K562 (cell line): ENCODE measurements at regions of chr1 and their contacts with region 1.

Region 1: GRCh38 chr1:114346480-114347029 is 164.4 kb downstream of the TRIM33 start:
- DNase-seq: peak; percentile 95 to 98 (median 96)
- ATAC-seq: peak; percentile 99
- H3K4me3 ChIP-seq: peak overlapping the region; percentile 20
- H3K27ac ChIP-seq: no peak overlapping the region
- H3K4me1 ChIP-seq: peaks cover 2 to 12% of the 10 kb centered on the region in 2 experiments; a peak in 4 of 5 replicates
- H3K27me3 ChIP-seq: no peaks in the 10 kb centered on the region; a peak in 1 of 5 replicates
- CTCF ChIP-seq: peak; percentile 100
- EP300 ChIP-seq: peak; percentile 50
- POLR2A ChIP-seq: no peak
- RAD21 ChIP-seq: peak; percentile 100

Region 2: GRCh38 chr1:114310695-114311271 is 35.8 kb before region 1 on chr1:
- CTCF ChIA-PET with region 1: no interaction called
- POLR2A ChIA-PET with region 1: no interaction called
- in situ Hi-C with region 1: no loop called
- intact Hi-C with region 1: no loop called
- DNase-seq: no peak
- ATAC-seq: no peak
- H3K4me3 ChIP-seq: no peak overlapping the region
- H3K27ac ChIP-seq: no peak overlapping the region
- H3K4me1 ChIP-seq: no peaks in the 10 kb centered on the region
- H3K27me3 ChIP-seq: peaks cover 0 to 3% of the 10 kb centered on the region in 2 experiments; a peak in 1 of 5 replicates
- CTCF ChIP-seq: no peak
- EP300 ChIP-seq: no peak
- POLR2A ChIP-seq: no peak
- RAD21 ChIP-seq: no peak

Region 3: DNA sequence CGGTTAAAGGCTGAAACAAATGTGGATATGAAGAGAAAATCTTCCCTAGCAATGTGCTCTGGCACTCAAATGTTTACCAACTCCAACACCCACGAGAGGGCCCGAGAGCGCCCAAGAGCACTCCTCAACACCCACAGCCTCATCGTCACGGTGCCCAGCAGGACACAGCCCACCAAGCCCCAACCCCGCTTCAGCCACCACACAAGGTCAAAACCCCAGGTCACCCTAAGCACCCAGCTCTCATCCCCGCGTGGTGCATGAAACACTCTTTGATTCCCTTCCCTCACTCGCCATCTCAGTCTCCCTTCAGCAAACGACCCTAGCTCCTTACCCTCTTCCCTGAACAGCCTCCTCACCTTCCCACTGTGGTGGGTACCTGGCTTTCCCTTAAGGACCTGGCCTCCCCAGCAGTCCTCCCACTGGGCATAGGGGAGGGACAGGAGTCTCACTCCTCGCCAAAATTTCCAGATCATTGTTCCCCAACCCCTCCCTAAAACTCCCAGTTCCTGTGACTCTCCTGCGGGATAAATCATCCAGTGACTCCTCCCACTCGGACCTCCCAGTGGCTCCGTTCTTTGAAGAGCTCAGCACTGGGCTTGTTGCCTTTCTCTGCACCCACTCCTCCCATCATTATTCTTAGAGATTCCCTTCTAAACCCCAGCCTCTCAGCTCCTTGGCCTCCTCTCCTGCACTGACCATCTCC is 22.4 kb before region 1 on chr1:
- CTCF ChIA-PET with region 1: no interaction called
- POLR2A ChIA-PET with region 1: no interaction called
- in situ Hi-C with region 1: no loop called
- intact Hi-C with region 1: no loop called
- DNase-seq: no peak
- ATAC-seq: no peak
- H3K4me3 ChIP-seq: no peak overlapping the region
- H3K27ac ChIP-seq: no peak overlapping the region
- H3K4me1 ChIP-seq: no peaks in the 10 kb centered on the region
- H3K27me3 ChIP-seq: peaks cover 0 to 15% of the 10 kb centered on the region in 2 experiments; a peak in 1 of 5 replicates
- CTCF ChIP-seq: no peak
- EP300 ChIP-seq: no peak
- POLR2A ChIP-seq: no peak
- RAD21 ChIP-seq: no peak

Region 4: DNA sequence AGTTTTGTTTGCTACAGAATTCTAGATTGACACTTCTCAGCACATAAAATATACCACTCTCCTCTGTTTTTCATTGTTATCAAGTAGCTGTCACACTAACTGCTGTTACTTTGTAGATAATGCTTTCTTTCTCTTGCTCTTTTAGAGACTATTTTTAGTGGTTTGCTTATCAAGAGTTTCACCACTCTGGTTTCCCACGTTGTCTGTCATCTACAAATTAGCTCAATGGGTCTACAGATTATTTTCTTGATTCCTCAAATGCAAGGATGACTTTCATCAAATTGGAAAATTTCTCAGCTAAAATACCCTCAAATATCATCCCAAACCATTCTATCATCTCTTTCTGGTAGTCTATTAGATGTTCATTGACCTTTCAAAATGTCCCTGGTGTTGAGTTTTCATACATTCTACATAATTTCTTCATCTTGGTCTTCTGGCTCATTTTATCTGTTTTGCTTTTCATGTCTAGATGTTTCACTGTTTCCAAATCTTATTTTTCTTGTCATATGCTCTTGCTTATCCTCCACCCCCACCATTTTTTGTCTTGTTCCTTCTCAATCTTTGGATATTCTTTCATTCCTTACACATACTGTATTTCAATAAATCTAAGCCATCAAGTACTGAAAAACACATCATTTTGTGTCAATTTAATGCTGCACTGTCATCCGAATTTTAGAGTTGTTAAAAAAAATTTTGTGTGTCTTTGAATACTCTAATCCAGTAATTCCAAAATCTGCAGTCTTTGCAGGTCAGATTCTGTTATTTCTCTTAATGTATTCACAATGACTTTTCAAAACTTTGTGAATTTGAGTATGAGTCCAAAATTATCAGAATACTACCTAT is 42.1 kb after region 1 on chr1:
- CTCF ChIA-PET with region 1: no interaction called
- POLR2A ChIA-PET with region 1: interaction called, 3 read pairs
- in situ Hi-C with region 1: no loop called
- intact Hi-C with region 1: loop called (anchors 2 kb)
- DNase-seq: peak in 2 of 4 experiments; percentile 63 to 81
- ATAC-seq: peak; percentile 69
- H3K4me3 ChIP-seq: no peak overlapping the region
- H3K27ac ChIP-seq: peak overlapping the region; percentile 57
- H3K4me1 ChIP-seq: peaks cover 11 to 24% of the 10 kb centered on the region in 2 experiments; a peak in 4 of 5 replicates
- H3K27me3 ChIP-seq: no peaks in the 10 kb centered on the region
- CTCF ChIP-seq: no peak
- EP300 ChIP-seq: peak; percentile 96
- POLR2A ChIP-seq: peak; percentile 15
- RAD21 ChIP-seq: no peak

Region 5: DNA sequence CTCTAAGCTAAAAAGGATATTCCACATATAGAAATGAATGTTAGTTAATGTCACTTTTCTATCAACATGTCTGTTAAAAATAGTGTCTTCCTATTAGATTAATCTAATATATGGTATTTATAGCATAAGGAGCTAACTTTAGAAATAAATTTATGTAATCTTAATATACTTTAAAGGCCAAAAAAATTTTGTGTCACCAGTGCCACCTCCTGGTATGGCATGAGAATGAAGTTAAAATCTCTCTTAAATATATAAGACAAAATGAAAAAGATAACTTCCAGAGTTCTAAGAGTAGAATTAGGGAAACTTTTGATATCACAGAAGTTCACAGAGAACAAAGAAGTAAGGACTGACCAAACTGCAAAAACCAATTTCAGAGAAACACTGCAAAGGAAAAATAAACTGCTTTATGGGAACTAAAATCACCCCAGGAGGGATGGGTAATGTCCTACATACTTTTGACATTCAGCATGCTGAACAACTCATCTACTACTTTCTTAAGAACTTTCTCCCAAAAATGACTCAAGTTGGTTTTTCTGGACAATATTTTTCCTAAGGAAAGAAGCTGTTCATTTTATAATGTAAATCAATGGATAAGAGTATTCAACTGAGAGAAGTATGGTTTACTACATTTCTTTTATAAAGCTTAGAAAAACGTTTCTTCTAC is 81.7 kb after region 1 on chr1:
- CTCF ChIA-PET with region 1: interaction called, 68 read pairs
- POLR2A ChIA-PET with region 1: no interaction called
- in situ Hi-C with region 1: no loop called
- intact Hi-C with region 1: loop called (anchors 1 kb)
- DNase-seq: peak in 1 of 4 experiments; percentile 33
- ATAC-seq: peak; percentile 66
- H3K4me3 ChIP-seq: no peak overlapping the region
- H3K27ac ChIP-seq: no peak overlapping the region
- H3K4me1 ChIP-seq: no peaks in the 10 kb centered on the region
- H3K27me3 ChIP-seq: no peaks in the 10 kb centered on the region
- CTCF ChIP-seq: peak in 2 of 3 experiments; percentile 59 to 73; a peak in 3 of 6 replicates
- EP300 ChIP-seq: no peak
- POLR2A ChIP-seq: no peak
- RAD21 ChIP-seq: peak; percentile 62 to 77

Region 6: GRCh38 chr1:114558544-114558943 is 212.0 kb after region 1 on chr1:
- CTCF ChIA-PET with region 1: interaction called, 32 read pairs
- POLR2A ChIA-PET with region 1: no interaction called
- in situ Hi-C with region 1: no loop called
- intact Hi-C with region 1: loop called (anchors 1 kb)
- DNase-seq: peak in 2 of 4 experiments; percentile 37 to 52
- ATAC-seq: peak; percentile 86
- H3K4me3 ChIP-seq: no peak overlapping the region
- H3K27ac ChIP-seq: no peak overlapping the region
- H3K4me1 ChIP-seq: no peaks in the 10 kb centered on the region
- H3K27me3 ChIP-seq: no peaks in the 10 kb centered on the region
- CTCF ChIP-seq: peak; percentile 54 to 80 (median 57); a peak in 4 of 6 replicates
- EP300 ChIP-seq: no peak
- POLR2A ChIP-seq: no peak
- RAD21 ChIP-seq: peak; percentile 70 to 87

Region 7: GRCh38 chr1:114648502-114648901 is 301.9 kb after region 1 on chr1:
- CTCF ChIA-PET with region 1: no interaction called
- POLR2A ChIA-PET with region 1: no interaction called
- in situ Hi-C with region 1: no loop called
- intact Hi-C with region 1: loop called (anchors 2 kb)
- DNase-seq: peak in 2 of 4 experiments; percentile 16 to 25
- ATAC-seq: peak; percentile 70
- H3K4me3 ChIP-seq: no peak overlapping the region
- H3K27ac ChIP-seq: no peak overlapping the region
- H3K4me1 ChIP-seq: no peaks in the 10 kb centered on the region
- H3K27me3 ChIP-seq: peaks cover 15 to 38% of the 10 kb centered on the region in 2 experiments
- CTCF ChIP-seq: peak in 2 of 3 experiments; percentile 28 to 41; a peak in 2 of 6 replicates
- EP300 ChIP-seq: no peak
- POLR2A ChIP-seq: no peak
- RAD21 ChIP-seq: peak in 1 of 2 experiments; percentile 53; a peak in 2 of 4 replicates